ENCODE measurements at regions of chr11 and their contacts with region 1.

Region 1: DNA sequence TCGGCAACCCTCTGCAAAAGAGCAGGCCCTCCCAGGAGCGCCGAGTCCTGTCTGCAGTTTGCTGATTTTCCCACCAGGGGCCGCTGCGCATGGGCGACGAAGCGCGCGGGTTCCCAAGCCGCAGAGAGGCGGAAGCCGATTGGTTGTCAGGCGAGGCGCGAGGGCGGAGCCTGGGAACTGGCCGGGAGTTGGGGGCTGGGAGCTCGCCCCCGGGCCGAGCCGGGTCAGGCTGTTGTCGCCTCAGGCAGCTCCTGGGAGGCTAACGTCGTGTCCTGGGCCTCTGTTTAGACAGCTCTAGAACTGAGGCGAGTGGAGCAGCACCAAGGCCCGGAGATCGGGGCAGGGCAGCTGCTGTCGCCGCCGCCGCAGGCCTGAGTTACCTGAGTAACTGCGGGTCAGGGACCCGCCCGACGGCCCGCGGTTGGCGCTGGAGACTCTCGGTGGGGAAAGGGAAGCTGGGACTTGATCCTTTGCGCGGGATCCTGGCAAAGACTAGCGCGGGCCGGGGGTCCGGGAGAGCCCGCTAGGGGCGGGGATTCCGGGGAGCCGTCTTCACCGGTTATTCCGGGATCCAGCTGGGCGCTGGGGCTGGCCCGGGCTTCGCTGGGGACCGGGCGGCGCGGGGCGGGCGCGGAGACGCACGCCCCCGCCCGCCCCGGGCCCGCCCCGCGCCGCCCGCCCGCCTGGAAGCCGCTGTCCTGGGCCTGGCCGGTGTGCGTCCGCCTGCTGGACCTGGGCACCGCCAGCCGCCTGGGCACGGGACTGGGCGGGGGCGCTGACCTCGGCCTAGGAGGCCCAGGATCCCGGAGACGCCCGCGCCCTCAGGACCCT is at the start of gene STIM1:
- DNase-seq: peak; percentile 91
- CTCF ChIP-seq: peak; percentile 94

Region 2: GRCh38 chr11:3841426-3842350 is 13.5 kb before region 1 on chr11:
- CTCF ChIA-PET with region 1: interaction called, 329 read pairs
- POLR2A ChIA-PET with region 1: interaction called, 22 read pairs
- DNase-seq: peak; percentile 87
- CTCF ChIP-seq: peak; percentile 87

Region 3: DNA sequence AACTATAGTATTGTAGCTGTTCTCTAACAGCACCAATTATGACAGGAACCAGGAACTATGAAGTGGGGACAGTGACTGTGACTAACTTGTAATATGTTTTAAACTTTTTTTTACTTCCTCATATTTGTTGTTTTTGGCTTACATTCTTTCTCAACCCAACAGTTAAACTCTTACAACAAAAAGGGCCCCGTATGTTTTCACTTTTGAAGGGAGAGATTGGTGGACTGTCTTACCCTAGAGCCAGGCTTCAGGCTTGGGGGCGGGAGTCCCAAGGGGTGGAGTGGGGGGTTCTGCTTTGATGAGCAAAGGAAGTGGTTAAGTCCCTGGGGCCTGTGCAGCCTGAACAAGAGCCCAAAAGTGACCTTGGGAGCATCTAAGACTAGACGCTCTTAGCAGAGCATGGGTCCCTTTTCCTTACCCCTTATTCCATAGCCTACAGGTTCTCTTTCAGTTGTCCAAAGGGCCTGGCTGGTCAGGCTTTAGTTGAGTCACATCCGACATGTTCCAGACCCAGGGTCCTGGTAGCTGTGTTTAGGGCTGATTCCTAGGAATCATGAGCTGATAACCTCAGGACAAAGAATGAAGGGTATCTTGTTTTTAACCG is 39.0 kb after region 1 on chr11:
- CTCF ChIA-PET with region 1: interaction called, 15 read pairs
- POLR2A ChIA-PET with region 1: interaction called, 8 read pairs
- DNase-seq: peak; percentile 91
- CTCF ChIP-seq: no peak

Region 4: DNA sequence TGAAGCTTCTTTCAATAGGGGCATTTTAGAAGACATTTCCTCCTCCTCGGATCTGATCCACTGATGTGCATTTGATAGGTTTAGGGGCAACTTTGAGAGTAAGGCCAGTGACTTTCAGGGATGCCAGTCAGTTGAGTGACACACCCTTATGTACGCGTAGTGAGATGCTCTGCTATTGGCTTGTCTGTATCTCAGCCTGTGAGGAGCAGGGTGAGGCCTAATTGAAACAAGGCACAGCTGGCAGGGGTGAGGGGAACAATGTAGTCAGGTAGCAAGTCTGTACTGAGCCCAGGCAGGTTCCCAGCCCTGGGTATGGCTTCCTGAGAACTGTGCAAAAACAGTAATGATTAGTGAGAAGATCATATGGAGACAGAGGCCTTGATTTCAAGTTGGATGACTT is 61.8 kb after region 1 on chr11:
- CTCF ChIA-PET with region 1: interaction called, 12 read pairs
- POLR2A ChIA-PET with region 1: no interaction called
- DNase-seq: no peak
- CTCF ChIP-seq: no peak

Region 5: GRCh38 chr11:3967695-3968094 is 112.5 kb after region 1 on chr11:
- CTCF ChIA-PET with region 1: interaction called, 16 read pairs
- POLR2A ChIA-PET with region 1: no interaction called
- DNase-seq: no peak
- CTCF ChIP-seq: no peak

Region 6: DNA sequence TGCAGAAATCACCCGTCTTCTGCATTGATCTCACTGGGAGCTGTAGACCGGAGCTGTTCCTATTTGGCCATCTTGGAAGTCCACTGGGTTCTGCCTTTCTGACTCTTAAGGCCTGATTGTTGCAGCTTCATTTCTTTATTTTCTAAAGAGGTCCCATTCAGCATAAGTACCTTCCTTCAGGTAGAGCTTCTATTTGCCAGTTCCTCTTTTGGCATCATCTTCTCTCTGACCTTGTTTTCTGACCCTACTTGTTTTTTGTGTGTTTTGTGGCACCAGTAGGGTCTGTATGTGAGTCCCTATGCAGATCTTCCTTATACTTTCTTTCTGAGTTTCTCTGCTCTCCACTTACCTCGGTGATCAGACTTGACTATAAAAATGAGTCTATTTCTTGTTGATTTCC is 161.9 kb after region 1 on chr11:
- CTCF ChIA-PET with region 1: interaction called, 12 read pairs
- POLR2A ChIA-PET with region 1: no interaction called
- DNase-seq: no peak
- CTCF ChIP-seq: no peak

Region 7: DNA sequence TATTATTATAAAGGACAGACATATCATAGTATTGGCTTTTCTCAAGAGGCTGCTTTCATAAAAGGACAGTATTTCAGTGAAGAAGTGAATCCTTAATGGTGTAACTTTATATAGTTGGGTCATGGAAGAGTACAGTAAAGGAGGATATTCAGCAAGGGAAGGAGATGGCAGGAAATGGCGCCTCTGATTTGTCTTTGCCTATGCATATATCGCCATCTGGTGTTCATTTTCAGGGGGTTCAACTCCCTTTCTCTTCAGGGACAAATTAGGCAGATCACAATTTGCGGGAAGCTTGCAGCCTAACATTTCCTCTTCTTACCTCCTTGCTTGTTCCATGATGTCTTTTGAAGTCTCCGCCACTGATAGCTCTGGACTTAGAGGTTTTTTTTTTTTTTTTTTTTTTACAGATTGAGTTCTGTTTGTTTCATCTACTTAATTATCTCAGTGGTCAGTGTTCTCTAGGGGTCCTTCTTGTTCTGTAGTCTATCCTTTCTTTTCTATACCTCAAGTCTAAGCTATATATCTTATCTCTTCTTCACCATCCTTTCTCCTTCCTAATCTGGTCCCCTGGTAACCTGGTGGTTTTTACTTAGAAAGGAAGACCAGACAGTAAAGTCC is 217.6 kb after region 1 on chr11:
- CTCF ChIA-PET with region 1: interaction called, 1,411 read pairs
- POLR2A ChIA-PET with region 1: interaction called, 4 read pairs
- DNase-seq: peak; percentile 62
- CTCF ChIP-seq: peak; percentile 75

Measured in GM10248 (cell line).